ENCODE measurements at regions of chr6 and their contacts with region 1.

Region 1: GRCh38 chr6:151390276-151391032 is 905 bp downstream of the ZBTB2 start:
- DNase-seq: peak; percentile 99
- H3K4me3 Mint-ChIP-seq: peak overlapping the region; percentile 39
- H3K27ac Mint-ChIP-seq: peak overlapping the region; percentile 65
- H3K4me1 Mint-ChIP-seq: peaks cover 68% of the 10 kb centered on the region
- H3K27me3 Mint-ChIP-seq: no peaks in the 10 kb centered on the region

Region 2: DNA sequence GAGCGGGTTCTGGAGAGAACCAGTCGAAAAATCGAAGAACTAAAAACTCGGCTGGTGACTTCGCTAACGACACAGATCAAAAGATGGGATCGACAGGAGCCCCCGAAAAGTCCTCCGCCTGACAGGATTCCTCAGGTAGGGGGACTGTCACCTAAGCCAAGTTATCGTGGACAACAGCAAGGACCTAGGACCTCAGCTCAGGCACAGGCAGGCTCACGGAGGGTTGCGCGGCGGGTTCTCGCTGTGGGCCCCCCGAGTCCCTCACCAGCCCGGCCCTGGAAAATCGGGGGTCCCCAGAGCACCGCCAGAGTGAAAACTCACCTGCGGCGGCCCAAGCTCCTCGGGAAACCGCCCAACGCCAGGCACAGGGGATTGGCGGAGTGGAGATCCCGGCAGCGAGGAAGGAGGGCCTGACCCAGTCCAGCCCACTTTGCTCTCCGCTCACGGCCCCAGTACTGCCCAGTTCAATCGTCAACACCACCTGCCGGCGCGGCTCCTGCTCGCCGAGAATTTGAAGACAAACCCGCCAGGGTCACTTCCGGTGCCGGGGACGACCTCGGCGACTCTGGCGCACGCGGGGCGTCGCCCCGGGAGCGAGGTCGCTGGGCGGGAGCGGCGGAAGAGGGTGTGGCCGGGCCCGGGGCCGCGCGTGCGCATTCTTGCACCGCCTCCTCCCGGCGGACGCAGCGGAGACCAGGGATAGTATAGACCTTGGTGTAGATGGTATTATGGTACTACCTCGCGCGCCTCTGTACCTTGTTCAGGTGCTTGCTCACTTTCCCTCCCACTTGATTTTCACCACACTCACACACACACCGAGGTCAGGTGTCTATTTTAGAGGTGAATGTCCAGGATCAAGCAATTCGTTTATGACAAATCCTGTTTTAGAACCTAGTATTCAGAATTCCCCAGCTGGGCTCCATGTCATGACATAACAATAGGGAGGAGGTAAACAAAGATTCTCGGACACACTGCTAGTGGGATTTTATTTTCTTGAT is 1742.0 kb before region 1 on chr6 and contains the start of gene KATNA1:
- intact Hi-C with region 1: loop called (anchors 2 kb)
- DNase-seq: peak; percentile 89
- H3K4me3 Mint-ChIP-seq: peak within 1 kb of the TSS; percentile 96
- H3K27ac Mint-ChIP-seq: peak within 1 kb of the TSS; percentile 83
- H3K4me1 Mint-ChIP-seq: peaks cover 31% of the 10 kb centered on the region
- H3K27me3 Mint-ChIP-seq: no peaks in the 10 kb centered on the region
- total RNA-seq, gene KATNA1: 20.8 and 22.1 TPM in 2 replicates

Region 3: GRCh38 chr6:150865406-150866146 is 524.9 kb before region 1 on chr6 and contains the start of gene MTHFD1L:
- intact Hi-C with region 1: loop called (anchors 1 kb)
- DNase-seq: peak; percentile 74
- H3K4me3 Mint-ChIP-seq: peak within 1 kb of the TSS; percentile 86
- H3K27ac Mint-ChIP-seq: peak within 1 kb of the TSS; percentile 91
- H3K4me1 Mint-ChIP-seq: peaks cover 38% of the 10 kb centered on the region
- H3K27me3 Mint-ChIP-seq: peaks cover 2% of the 10 kb centered on the region
- total RNA-seq, gene MTHFD1L: 121 and 125 TPM in 2 replicates

Region 4: DNA sequence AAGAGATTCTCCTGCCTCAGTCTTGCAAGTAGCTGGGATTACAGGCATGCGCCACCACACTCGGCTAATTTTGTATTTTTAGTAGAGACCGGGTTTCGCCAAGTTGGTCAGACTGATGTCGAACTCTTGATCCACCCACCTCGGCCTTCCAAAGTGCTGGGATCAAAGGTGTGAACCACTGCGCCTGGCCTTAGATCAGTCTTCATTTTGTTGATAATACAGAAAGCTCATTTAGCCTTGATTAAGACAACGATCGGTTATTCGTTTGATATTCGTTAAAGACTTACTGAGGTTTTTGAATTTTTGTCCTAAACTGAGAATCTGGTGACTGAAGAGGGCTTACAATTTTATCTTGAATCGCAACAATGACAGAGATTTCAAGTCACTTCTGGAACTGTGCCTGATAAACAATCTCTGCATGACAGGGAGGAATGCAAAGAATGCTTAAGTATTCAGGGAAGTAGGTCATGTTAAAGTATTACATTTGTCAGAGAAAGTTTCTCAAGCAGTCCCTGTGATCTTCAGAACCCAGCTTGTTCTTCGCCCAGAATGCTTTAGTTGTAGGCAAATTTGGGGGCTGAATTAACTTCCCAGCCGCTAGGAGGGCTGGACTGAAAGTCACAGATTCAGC is 135.9 kb before region 1 on chr6:
- intact Hi-C with region 1: no loop called
- DNase-seq: no peak
- H3K4me3 Mint-ChIP-seq: no peak overlapping the region
- H3K27ac Mint-ChIP-seq: no peak overlapping the region
- H3K4me1 Mint-ChIP-seq: no peaks in the 10 kb centered on the region
- H3K27me3 Mint-ChIP-seq: peaks cover 23% of the 10 kb centered on the region

Region 5: DNA sequence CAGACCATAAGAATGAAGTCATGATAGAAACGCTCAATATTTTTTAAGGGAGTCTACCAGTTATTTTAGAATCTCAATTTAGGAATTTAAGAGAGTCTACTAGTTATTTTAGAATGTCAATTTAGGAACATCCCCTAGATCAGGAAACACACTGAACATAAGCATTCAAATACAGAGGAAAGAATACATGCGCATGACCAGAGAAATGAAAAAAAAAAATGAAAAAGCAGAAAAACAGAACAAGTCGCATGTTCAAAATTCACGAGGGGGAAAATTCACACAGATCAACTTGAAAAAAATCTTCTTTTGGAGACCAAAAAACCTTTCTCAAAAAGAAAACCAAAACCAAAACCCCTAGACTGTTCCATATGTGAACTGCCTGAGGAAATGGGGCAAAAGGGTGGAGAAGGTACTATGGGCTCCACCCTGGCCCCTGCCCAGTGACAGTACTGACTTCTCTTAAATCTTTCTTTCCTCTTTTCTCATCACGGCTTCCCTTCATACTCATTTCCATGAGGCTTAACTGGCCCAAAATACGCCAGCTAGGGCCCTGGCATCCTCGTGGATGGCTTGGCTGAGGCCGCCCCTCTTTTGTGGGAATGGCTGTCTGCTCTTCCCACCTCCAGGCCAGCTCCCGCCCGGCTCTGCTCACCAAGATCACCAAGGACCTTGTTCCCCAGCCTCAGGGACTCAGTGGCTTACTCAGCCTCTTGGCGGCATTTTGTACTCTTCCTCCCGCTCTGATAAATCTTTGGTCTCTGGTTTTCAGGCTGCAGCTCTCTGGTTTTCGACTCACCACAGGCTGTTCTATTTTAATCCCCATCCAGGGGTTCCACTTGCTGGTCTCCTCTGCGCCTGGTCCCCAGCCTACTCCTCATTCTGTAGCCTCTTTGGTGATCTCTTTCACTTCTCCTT is 10.3 kb before region 1 on chr6:
- intact Hi-C with region 1: loop called (anchors 1 kb)
- DNase-seq: peak; percentile 27
- H3K4me3 Mint-ChIP-seq: peak overlapping the region; percentile 86
- H3K27ac Mint-ChIP-seq: peak overlapping the region; percentile 97
- H3K4me1 Mint-ChIP-seq: peaks cover 74% of the 10 kb centered on the region
- H3K27me3 Mint-ChIP-seq: no peaks in the 10 kb centered on the region

Region 6: DNA sequence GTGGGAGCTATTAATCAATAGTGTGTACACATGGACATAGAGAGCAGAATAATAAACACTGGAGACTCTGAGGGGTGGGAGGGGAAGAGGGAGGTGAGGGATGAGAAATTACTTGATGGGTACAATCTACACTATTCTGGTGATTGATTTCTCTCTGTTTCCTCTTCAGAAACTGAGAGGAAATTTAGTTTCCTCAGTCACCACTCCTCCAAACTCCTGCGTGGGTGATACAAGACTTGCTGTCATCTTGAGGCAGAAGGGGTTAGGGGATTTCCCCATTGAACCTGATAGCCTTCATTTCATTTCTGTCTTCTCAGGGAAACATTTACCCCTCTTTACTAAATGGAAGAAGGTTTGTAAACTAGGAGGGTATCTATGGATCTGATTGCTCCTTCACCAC is 332.7 kb after region 1 on chr6:
- intact Hi-C with region 1: loop called (anchors 10 kb)
- DNase-seq: peak; percentile 34
- H3K4me3 Mint-ChIP-seq: no peak overlapping the region
- H3K27ac Mint-ChIP-seq: peak overlapping the region; percentile 32
- H3K4me1 Mint-ChIP-seq: peaks cover 52% of the 10 kb centered on the region
- H3K27me3 Mint-ChIP-seq: peaks cover 2% of the 10 kb centered on the region

Region 7: GRCh38 chr6:152982768-152983636 is 1592.5 kb after region 1 on chr6 and contains the start of gene FBXO5:
- intact Hi-C with region 1: loop called (anchors 2 kb)
- DNase-seq: peak; percentile 98
- H3K4me3 Mint-ChIP-seq: peak within 1 kb of the TSS; percentile 96
- H3K27ac Mint-ChIP-seq: peak within 1 kb of the TSS; percentile 100
- H3K4me1 Mint-ChIP-seq: peaks cover 53% of the 10 kb centered on the region
- H3K27me3 Mint-ChIP-seq: no peaks in the 10 kb centered on the region
- total RNA-seq, gene FBXO5: 29.4 and 33.2 TPM in 2 replicates